ENCODE measurements at regions of chr15 and their contacts with region 1.

Region 1: DNA sequence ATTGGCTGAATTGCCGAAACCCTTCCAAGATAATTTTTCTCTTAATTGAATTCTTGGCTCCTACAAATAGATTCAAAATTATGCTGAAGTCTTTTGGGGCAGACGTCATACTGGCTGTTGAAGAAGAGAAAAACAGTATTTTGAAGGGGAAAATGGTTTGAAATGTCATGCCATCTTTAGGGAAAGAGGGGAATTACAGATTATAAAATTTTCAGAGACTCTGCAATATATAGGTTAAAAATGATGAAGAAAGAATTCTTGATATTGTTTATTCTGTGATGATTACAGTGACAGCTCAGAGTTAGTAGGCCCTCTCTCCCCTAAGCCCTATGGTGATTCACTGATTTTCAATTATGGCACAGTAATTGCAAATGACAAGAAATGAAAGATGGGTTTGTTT is 86.1 kb downstream of the CGNL1 start:
- DNase-seq: no peak

Region 2: GRCh38 chr15:57340682-57341259 is 121.6 kb before region 1 on chr15:
- intact Hi-C with region 1: loop called (anchors 5 kb)
- DNase-seq: no peak

Region 3: DNA sequence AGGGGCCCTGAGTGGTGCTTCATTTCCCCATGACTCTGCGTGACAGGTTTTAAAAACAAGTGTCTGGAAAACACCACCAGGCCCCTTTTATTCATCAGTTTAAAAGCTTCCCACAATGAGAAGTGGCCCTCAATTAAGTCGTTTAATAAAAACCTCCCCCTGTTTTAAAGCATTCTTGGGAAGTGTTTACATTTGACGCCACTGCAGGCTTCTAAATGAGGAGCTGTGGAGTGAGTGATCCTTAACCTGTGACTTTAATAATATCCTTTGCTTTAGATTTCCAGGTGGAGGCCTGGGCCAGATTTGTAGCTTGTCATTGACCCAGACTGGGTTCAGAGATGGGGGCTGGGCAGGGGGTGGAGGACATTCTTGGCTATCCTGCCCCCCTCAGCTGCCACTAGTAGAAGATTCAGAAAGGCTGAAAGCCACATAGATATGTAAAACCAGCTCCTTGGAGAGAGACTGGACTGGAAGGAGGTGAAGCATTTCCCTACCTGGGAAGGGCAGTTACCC is 74.8 kb before region 1 on chr15:
- intact Hi-C with region 1: no loop called
- DNase-seq: no peak

Measured in cardiac septum (tissue), 1 donor.